Activated naive CD4-positive, alpha-beta T cell treated with anti-CD3 and anti-CD28 coated beads for 36 hours (primary cell): ENCODE measurements at regions of chr16 and their contacts with region 1.

Region 1: GRCh38 chr16:71484006-71484893 is 4.9 kb downstream of the ZNF19 start:
- DNase-seq: peak; percentile 90
- H3K4me3 Mint-ChIP-seq: peak overlapping the region; percentile 74
- H3K27ac Mint-ChIP-seq: peak overlapping the region; percentile 79
- H3K4me1 Mint-ChIP-seq: peaks cover 13% of the 10 kb centered on the region
- H3K27me3 Mint-ChIP-seq: no peaks in the 10 kb centered on the region

Region 2: DNA sequence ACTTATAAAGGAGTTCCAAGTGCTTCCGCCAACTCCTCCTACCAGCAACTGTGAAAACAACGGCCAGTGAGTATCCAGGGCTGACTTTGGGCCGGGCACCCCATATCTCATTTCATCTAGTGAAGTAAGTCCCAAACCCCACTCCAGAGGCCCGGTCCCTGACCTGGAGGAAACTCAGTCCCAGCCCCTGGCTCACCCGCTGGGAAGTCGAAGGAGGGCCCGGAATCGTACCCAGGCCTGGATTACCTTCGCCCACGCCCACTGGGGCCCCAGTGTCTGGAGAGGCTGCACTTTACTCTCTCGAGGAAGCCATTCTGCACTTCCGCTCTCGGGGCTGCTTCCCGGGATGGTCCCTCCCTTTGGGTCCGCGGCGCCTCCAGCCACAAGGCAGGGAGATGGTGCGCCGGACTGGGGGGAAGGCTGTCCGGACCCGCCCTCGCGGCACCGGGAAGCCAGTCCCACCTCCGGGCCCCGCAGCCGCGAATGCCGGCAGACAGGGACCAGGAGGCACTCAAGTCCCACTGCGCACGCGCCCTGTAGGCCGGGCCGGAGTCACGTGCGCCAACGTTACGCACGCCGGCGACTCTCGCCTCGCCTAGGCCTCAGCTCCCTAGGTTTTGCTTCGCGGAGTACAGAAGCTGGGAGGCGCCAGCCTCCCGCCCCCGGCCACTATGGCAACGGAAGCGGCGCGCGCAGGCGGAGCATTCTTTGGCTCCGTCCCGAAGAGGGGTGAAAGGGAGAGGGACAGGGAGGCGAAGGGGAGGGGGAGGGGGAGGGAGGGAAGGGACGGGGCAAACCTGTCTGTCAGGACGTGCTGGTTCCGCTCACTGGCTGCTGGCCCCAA is 195.1 kb before region 1 on chr16 and contains the start of gene CMTR2:
- CTCF ChIA-PET with region 1: no interaction called
- intact Hi-C with region 1: loop called (anchors 2 kb)
- DNase-seq: peak; percentile 93
- H3K4me3 Mint-ChIP-seq: peak within 1 kb of the TSS; percentile 84
- H3K27ac Mint-ChIP-seq: peak within 1 kb of the TSS; percentile 86
- H3K4me1 Mint-ChIP-seq: peaks cover 9% of the 10 kb centered on the region
- H3K27me3 Mint-ChIP-seq: peaks cover 7% of the 10 kb centered on the region
- total RNA-seq, gene CMTR2: 14.4 to 15.1 TPM

Region 3: GRCh38 chr16:71358464-71358998 is 125.7 kb before region 1 on chr16 and contains the start of gene CALB2:
- CTCF ChIA-PET with region 1: no interaction called
- intact Hi-C with region 1: no loop called
- DNase-seq: peak; percentile 62
- H3K4me3 Mint-ChIP-seq: no peak within 1 kb of the TSS
- H3K27ac Mint-ChIP-seq: no peak within 1 kb of the TSS
- H3K4me1 Mint-ChIP-seq: peaks cover 3% of the 10 kb centered on the region
- H3K27me3 Mint-ChIP-seq: peaks cover 23% of the 10 kb centered on the region
- total RNA-seq, gene CALB2: not detected

Region 4: GRCh38 chr16:71537643-71538042 is 53.4 kb after region 1 on chr16:
- CTCF ChIA-PET with region 1: interaction called, 3 read pairs
- intact Hi-C with region 1: loop called (anchors 1 kb)
- DNase-seq: peak; percentile 65
- H3K4me3 Mint-ChIP-seq: no peak overlapping the region
- H3K27ac Mint-ChIP-seq: no peak overlapping the region
- H3K4me1 Mint-ChIP-seq: no peaks in the 10 kb centered on the region
- H3K27me3 Mint-ChIP-seq: no peaks in the 10 kb centered on the region

Region 5: DNA sequence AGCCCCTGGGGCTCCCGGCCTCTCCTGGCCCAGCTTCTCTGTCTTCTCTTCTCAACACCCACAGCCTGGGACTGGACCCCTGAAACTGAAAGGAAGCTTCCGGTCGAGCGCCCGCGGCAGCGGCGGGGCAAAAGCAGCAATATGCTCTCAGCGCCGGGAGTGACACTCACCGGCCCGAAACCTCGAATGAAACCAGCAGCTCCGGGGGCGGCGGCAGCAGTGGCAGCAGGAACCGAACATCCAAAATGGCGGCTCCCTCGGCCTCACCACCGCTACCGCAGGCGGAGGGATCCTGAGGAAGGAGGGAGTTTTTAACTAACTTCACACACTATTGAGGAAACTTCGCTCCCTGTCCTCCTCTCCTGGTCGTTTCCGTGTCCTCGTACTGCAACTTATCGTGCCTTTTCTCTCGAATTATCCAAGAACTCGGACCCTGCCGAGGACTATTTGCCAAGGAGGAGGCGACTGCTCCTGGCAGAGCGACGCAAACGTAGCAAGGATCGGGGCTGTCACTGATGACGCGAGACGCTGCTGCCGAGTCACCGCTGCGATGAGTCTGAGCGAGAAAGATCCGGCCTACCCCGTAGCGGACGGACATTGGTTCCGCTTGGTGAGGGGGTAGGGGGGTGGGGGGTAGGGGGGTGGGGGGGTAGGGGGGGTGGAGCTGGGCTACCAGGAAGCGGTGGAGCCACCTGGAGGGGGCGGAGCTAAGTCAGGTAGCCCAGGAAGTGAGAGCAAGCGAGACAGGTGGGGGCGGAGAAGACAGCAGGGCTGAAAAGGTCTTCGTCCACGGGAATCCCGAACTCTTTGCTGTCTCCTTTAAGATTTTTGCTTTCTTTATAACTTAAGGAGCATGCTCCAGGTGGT is 324.6 kb after region 1 on chr16 and contains the start of gene AP1G1:
- CTCF ChIA-PET with region 1: no interaction called
- intact Hi-C with region 1: loop called (anchors 2 kb)
- DNase-seq: peak; percentile 97
- H3K4me3 Mint-ChIP-seq: peak within 1 kb of the TSS; percentile 90
- H3K27ac Mint-ChIP-seq: peak within 1 kb of the TSS; percentile 100
- H3K4me1 Mint-ChIP-seq: peaks cover 42% of the 10 kb centered on the region
- H3K27me3 Mint-ChIP-seq: no peaks in the 10 kb centered on the region
- total RNA-seq, gene AP1G1: 56.4 to 59.3 TPM

Region 6: DNA sequence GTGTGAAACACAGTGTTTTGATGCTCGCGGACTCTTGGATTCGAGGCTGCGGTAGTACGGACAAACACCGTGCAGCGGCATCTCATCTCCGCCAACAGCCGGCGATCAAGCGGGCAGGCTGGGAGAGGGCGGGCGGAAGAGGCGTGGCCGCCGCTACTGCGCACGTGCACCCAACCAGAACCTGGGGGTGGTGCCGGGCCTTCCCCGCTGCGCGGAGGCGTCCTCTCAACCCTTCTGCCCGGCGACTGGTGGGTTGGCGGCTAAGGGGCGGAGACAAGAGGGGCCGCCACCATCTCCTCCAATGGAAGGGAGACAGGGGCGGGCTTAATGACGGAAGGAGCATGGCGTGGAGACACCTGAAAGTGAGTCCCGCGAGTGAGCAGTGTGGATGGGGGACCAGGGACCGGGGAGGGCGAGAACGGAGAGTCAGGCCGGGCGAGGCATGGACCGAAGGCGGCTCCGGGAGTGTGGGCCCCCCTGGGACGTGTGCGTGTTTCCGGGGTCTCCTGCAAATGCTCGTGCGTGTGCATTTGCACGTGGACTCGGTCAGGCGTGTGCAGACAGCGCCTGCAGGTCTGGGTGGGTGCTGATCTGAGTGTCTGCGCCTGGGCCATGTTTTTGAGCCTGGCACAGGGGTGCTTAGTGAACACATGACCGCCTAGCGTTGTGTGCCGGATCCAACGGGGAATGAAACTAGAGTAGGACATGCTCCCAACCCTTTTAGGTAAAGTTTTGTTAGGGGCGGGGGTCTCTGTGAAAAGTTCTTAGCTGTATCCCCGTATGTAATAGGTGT is 524.4 kb after region 1 on chr16 and contains the start of gene DHODH:
- CTCF ChIA-PET with region 1: no interaction called
- intact Hi-C with region 1: loop called (anchors 5 kb)
- DNase-seq: peak; percentile 99
- H3K4me3 Mint-ChIP-seq: peak within 1 kb of the TSS; percentile 94
- H3K27ac Mint-ChIP-seq: peak within 1 kb of the TSS; percentile 76
- H3K4me1 Mint-ChIP-seq: peaks cover 21% of the 10 kb centered on the region
- H3K27me3 Mint-ChIP-seq: no peaks in the 10 kb centered on the region
- total RNA-seq, gene DHODH: 18.3 to 19.9 TPM